ENCODE measurements at regions of chr20 and their contacts with region 1.

Region 1: DNA sequence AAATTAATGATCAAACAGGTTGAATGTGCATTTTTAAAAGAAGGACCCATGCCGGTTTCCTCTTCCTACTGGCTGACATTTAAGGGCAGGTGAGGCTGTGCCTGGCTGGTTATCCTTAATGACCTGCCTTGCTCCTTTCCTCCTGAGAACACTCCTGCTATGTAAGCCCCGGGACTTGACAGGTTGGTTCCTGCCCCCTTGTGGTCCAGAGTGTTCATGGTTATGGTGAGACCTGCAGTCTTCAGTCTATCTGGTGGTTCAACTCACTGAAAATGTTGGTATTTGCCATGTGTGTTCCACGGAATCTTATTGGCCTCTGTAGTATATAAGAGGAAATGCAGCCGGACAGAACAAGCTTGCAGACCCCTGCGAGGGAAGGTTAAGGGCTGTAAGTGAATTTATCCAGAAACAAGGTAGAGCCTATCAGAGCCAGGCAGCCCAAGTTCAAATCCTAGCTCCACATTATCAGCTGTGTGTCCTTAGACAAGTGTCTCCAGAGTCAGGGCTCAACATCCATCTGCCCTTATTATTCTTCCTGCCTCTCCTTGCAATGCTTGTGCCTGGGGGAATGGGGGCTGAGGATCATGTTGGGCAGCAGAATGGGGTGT is 5.2 kb upstream of the BPIFA3 start:
- DNase-seq: peak; percentile 92 to 93
- H3K4me3 ChIP-seq: no peak overlapping the region
- H3K4me3 Mint-ChIP-seq: no peak overlapping the region
- H3K27ac Mint-ChIP-seq: no peak overlapping the region
- H3K4me1 ChIP-seq: no peaks in the 10 kb centered on the region
- H3K4me1 Mint-ChIP-seq: no peaks in the 10 kb centered on the region
- H3K27me3 ChIP-seq: peaks cover 1% of the 10 kb centered on the region
- H3K27me3 Mint-ChIP-seq: peaks cover 29% of the 10 kb centered on the region
- CTCF ChIP-seq: peak; percentile 87 to 97

Region 2: DNA sequence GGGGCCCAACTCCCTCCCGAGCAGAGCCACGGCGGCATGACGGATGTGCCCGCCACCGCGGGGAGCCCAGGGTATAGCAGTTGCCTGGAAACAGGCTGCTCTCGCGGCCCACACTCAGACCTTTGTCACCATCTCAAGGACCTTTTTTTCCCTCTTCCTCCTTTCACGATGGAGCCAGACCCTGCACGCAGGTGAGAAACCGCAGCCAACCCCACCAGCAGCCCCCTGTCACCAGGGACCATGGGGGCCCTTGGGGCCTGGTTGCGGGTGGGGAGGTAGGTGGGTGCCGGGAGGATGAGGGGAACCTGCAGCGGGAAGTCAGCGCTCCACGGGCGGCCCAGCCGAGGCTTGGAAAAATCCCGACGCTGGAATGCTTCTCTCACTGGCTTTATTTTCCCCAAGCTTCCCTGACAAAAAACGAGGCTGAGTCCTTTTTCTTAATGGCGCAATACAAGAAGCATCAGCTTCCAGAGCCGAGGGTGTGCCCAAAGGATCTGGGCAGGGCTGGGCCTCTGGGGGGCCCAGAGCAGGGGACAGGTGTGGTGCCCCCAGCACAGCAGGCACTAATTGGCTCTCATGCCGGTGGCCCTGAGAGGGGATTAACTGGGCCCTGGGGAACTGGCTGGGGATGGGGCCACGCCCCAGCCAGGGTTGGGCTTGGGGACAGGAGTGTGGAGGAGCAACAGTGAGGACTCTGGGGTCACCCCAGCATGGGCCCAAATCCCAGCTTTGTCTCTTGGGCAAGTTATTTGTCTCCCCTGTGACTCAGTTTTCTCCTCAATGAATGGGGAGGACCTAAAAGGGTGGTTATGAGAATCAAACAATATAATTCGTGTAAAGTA is 650.7 kb before region 1 on chr20:
- CTCF ChIA-PET with region 1: no interaction called
- POLR2A ChIA-PET with region 1: no interaction called
- intact Hi-C with region 1: no loop called
- DNase-seq: no peak
- H3K4me3 ChIP-seq: no peak overlapping the region
- H3K4me3 Mint-ChIP-seq: no peak overlapping the region
- H3K27ac Mint-ChIP-seq: no peak overlapping the region
- H3K4me1 ChIP-seq: peaks cover 17% of the 10 kb centered on the region
- H3K4me1 Mint-ChIP-seq: peaks cover 8% of the 10 kb centered on the region
- H3K27me3 ChIP-seq: no peaks in the 10 kb centered on the region
- H3K27me3 Mint-ChIP-seq: no peaks in the 10 kb centered on the region
- CTCF ChIP-seq: no peak

Region 3: DNA sequence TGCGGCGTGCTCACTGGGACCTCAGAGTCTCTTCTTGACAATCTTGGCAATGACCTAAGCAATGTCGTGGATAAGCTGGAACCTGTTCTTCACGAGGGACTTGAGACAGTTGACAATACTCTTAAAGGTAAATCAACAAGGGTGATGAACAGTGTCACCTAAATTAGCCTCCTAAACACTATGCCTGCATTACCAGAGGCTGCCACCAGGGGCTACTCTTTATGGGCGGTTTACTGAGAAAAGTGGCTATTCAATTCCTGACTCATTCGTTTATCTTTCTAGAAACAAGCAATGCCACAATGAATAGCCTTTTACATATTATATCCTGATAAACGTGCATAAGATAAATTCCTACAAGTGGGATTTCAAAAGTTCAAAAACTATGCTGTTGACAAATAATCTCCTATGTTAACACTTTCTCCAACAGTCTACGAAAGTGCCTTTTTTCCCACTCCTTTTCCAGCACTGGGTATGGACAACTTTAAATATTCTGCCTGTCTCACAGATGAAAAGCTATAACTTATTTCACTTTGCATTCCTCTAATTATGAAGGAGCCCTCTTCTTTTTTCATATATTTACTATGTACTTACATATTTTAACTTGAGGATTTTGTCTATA is 42.6 kb before region 1 on chr20:
- CTCF ChIA-PET with region 1: interaction called, 3 read pairs
- POLR2A ChIA-PET with region 1: no interaction called
- intact Hi-C with region 1: loop called (anchors 2 kb)
- DNase-seq: peak; percentile 33 to 65
- H3K4me3 ChIP-seq: no peak overlapping the region
- H3K4me3 Mint-ChIP-seq: no peak overlapping the region
- H3K27ac Mint-ChIP-seq: no peak overlapping the region
- H3K4me1 ChIP-seq: no peaks in the 10 kb centered on the region
- H3K4me1 Mint-ChIP-seq: no peaks in the 10 kb centered on the region
- H3K27me3 ChIP-seq: no peaks in the 10 kb centered on the region
- H3K27me3 Mint-ChIP-seq: no peaks in the 10 kb centered on the region
- CTCF ChIP-seq: peak; percentile 57 to 95

Region 4: GRCh38 chr20:33178726-33179125 is 33.2 kb before region 1 on chr20:
- CTCF ChIA-PET with region 1: interaction called, 12 read pairs
- POLR2A ChIA-PET with region 1: no interaction called
- intact Hi-C with region 1: loop called (anchors 1 kb)
- DNase-seq: peak; percentile 96 to 100
- H3K4me3 ChIP-seq: no peak overlapping the region
- H3K4me3 Mint-ChIP-seq: peak overlapping the region; percentile 35
- H3K27ac Mint-ChIP-seq: peak overlapping the region; percentile 84
- H3K4me1 ChIP-seq: peaks cover 33% of the 10 kb centered on the region
- H3K4me1 Mint-ChIP-seq: peaks cover 33% of the 10 kb centered on the region
- H3K27me3 ChIP-seq: no peaks in the 10 kb centered on the region
- H3K27me3 Mint-ChIP-seq: no peaks in the 10 kb centered on the region
- CTCF ChIP-seq: no peak

Region 5: GRCh38 chr20:33262658-33263065 is 50.7 kb after region 1 on chr20:
- CTCF ChIA-PET with region 1: no interaction called
- POLR2A ChIA-PET with region 1: no interaction called
- intact Hi-C with region 1: no loop called
- DNase-seq: peak; percentile 70 to 80
- H3K4me3 ChIP-seq: no peak overlapping the region
- H3K4me3 Mint-ChIP-seq: no peak overlapping the region
- H3K27ac Mint-ChIP-seq: no peak overlapping the region
- H3K4me1 ChIP-seq: no peaks in the 10 kb centered on the region
- H3K4me1 Mint-ChIP-seq: no peaks in the 10 kb centered on the region
- H3K27me3 ChIP-seq: peaks cover 2% of the 10 kb centered on the region; the same call in 1 of the 2 replicates
- H3K27me3 Mint-ChIP-seq: peaks cover 11% of the 10 kb centered on the region
- CTCF ChIP-seq: peak; percentile 80 to 98